PC-3 (cell line): ENCODE measurements at regions of chr10 and their contacts with region 1.

Region 1: GRCh38 chr10:5762531-5762930 is 50.7 kb downstream of the GDI2 start:
- DNase-seq: no peak
- ATAC-seq: peak; percentile 53
- H3K4me3 ChIP-seq: no peak overlapping the region
- H3K27ac ChIP-seq: no peak overlapping the region
- H3K4me1 ChIP-seq: no peaks in the 10 kb centered on the region
- H3K27me3 ChIP-seq: no peaks in the 10 kb centered on the region
- CTCF ChIP-seq: no peak

Region 2: GRCh38 chr10:4825851-4826665 is 936.5 kb before region 1 on chr10 and contains the start of gene AKR1E2:
- CTCF ChIA-PET with region 1: interaction called, 11 read pairs
- POLR2A ChIA-PET with region 1: no interaction called
- intact Hi-C with region 1: no loop called
- DNase-seq: no peak
- ATAC-seq: no peak
- H3K4me3 ChIP-seq: no peak within 1 kb of the TSS
- H3K27ac ChIP-seq: no peak within 1 kb of the TSS
- H3K4me1 ChIP-seq: no peaks in the 10 kb centered on the region
- H3K27me3 ChIP-seq: no peaks in the 10 kb centered on the region
- CTCF ChIP-seq: no peak
- total RNA-seq, gene AKR1E2: 0.36 TPM in 1 of 2 replicates, not detected in the other

Region 3: GRCh38 chr10:5832936-5833335 is 70.4 kb after region 1 on chr10:
- CTCF ChIA-PET with region 1: no interaction called
- POLR2A ChIA-PET with region 1: no interaction called
- intact Hi-C with region 1: no loop called
- DNase-seq: peak; percentile 63
- ATAC-seq: peak; percentile 86
- H3K4me3 ChIP-seq: peak overlapping the region; percentile 42; the same call in 1 of the 2 replicates
- H3K27ac ChIP-seq: no peak overlapping the region
- H3K4me1 ChIP-seq: peaks cover 7% of the 10 kb centered on the region; the same call in 1 of the 2 replicates
- H3K27me3 ChIP-seq: no peaks in the 10 kb centered on the region
- CTCF ChIP-seq: no peak

Region 4: DNA sequence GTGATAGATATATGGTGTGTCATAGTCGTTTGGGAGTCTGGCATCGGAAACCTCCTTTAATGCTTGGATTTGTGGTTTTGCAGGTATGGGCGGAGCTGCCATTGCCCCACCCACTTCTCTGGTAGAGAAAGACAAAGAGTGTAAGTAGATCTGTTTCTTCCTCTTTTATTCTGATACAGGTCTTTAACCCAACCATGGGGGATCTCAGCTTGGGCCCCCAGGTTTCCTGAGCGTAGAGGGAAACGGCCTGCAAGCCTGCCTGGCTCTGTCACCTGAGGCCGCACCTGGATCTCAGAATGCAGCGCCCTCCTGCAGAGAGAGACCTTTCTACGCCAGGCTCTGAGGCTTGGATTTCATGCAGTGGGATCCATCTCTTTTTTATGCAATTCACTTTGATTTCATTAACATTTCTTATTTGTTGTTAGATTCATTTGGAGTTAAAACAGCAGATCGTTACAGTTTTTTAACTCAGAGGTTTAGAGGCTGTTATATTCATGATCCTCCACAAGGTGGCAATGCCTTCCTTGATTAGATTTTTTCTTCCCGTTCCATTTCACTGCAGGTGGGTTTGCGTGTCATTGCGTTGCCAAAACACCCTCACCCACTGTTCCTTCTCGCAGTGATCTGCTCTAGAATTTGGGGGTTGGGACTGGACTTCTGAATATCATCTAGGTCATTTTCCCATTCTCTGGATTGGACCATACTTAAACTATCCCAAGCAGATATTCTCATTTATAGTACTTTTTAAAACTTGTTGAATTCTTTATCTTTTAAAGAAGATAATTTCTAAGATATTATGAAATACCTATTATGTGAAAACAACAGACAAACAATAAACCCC is 346.3 kb after region 1 on chr10:
- CTCF ChIA-PET with region 1: no interaction called
- POLR2A ChIA-PET with region 1: no interaction called
- intact Hi-C with region 1: no loop called
- DNase-seq: peak; percentile 44
- ATAC-seq: peak; percentile 29; the same call in 1 of the 2 replicates
- H3K4me3 ChIP-seq: no peak overlapping the region
- H3K27ac ChIP-seq: no peak overlapping the region
- H3K4me1 ChIP-seq: peaks cover 27% of the 10 kb centered on the region
- H3K27me3 ChIP-seq: no peaks in the 10 kb centered on the region
- CTCF ChIP-seq: peak; percentile 63